SK-N-SH (cell line): ENCODE measurements at regions of chr2 and their contacts with region 1.

Region 1: GRCh38 chr2:174577967-174578589 is 19.5 kb downstream of the WIPF1 start:
- DNase-seq: peak; percentile 51
- H3K4me3 ChIP-seq: no peak overlapping the region
- H3K27ac ChIP-seq: peak overlapping the region; percentile 4 to 7; a peak in 3 of 4 replicates
- H3K4me1 ChIP-seq: no peaks in the 10 kb centered on the region; a peak in 2 of 4 replicates
- H3K27me3 ChIP-seq: no peaks in the 10 kb centered on the region
- CTCF ChIP-seq: peak; percentile 80
- EP300 ChIP-seq: no peak
- RAD21 ChIP-seq: peak; percentile 91

Region 2: GRCh38 chr2:173134703-173135102 is 1443.4 kb before region 1 on chr2:
- CTCF ChIA-PET with region 1: no interaction called
- POLR2A ChIA-PET with region 1: no interaction called
- DNase-seq: no peak
- H3K4me3 ChIP-seq: no peak overlapping the region
- H3K27ac ChIP-seq: no peak overlapping the region
- H3K4me1 ChIP-seq: peaks cover 6 to 30% of the 10 kb centered on the region in 2 experiments; a peak in 3 of 4 replicates
- H3K27me3 ChIP-seq: no peaks in the 10 kb centered on the region
- CTCF ChIP-seq: no peak
- EP300 ChIP-seq: no peak
- RAD21 ChIP-seq: no peak

Region 3: DNA sequence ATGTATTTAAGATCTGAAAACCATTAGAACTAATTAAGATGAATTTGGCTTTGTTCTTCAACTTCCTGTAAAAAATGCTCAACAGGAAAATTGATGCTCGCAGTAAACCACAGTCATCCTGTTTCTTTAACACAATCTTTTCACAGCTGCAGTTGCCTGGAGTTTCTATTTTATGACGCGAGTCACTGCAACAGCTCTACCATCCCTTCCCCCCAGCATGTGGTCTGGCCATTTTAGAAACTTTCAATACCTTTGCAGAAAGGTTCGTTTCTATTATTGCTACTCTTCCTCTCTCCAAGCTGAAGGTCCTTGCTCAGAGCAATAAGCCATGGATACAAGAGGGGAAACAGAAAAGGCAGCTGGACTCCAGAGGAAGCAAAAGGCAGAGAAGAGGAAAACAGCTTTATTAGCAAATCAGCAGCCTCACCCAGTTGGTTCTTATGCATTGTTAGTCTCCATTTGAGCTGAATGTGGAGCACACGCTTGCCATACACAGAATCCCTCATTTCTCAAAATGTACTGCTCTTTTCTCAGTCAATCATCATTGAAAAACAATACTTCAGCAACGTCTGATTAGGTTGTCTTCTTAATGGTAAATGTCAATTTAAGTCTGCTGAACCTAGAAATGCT is 15.6 kb after region 1 on chr2:
- CTCF ChIA-PET with region 1: interaction called, 24 read pairs
- POLR2A ChIA-PET with region 1: no interaction called
- DNase-seq: no peak
- H3K4me3 ChIP-seq: peak overlapping the region in 1 of 2 experiments; percentile 17; a peak in 1 of 4 replicates
- H3K27ac ChIP-seq: peak overlapping the region; percentile 96 to 98
- H3K4me1 ChIP-seq: peaks cover 53 to 63% of the 10 kb centered on the region in 2 experiments
- H3K27me3 ChIP-seq: no peaks in the 10 kb centered on the region
- CTCF ChIP-seq: no peak
- EP300 ChIP-seq: peak; percentile 20 to 62; a peak in 2 of 4 replicates
- RAD21 ChIP-seq: no peak

Region 4: DNA sequence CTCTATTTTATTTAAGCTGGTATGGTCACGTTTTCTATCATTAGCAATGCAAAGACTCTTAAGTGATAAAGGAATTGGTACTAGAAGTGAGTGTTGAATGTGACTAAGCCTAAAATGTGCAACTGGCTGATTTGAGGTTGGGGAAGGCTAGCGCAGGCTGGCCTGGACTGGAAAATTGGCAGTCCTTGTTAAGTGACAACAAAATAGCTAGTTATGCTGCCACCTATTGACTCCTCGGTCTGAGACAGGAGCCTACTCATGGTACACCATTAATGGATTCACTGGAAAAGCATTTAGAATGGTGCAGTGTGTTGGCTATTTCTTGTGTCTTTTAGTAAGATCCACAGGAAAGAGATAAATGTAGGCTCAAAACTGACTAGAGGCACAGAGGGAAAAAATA is 25.2 kb after region 1 on chr2:
- CTCF ChIA-PET with region 1: interaction called, 30 read pairs
- POLR2A ChIA-PET with region 1: no interaction called
- DNase-seq: peak; percentile 36
- H3K4me3 ChIP-seq: no peak overlapping the region
- H3K27ac ChIP-seq: peak overlapping the region in 1 of 2 experiments; percentile 83; a peak in 2 of 4 replicates
- H3K4me1 ChIP-seq: peaks cover 12 to 44% of the 10 kb centered on the region in 2 experiments
- H3K27me3 ChIP-seq: no peaks in the 10 kb centered on the region
- CTCF ChIP-seq: peak; percentile 55
- EP300 ChIP-seq: no peak
- RAD21 ChIP-seq: peak; percentile 67

Region 5: GRCh38 chr2:174682578-174683391 is 104.7 kb after region 1 on chr2:
- CTCF ChIA-PET with region 1: interaction called, 180 read pairs
- POLR2A ChIA-PET with region 1: no interaction called
- DNase-seq: peak; percentile 95
- H3K4me3 ChIP-seq: peak overlapping the region; percentile 89 to 93
- H3K27ac ChIP-seq: peak overlapping the region; percentile 72 to 89
- H3K4me1 ChIP-seq: peaks cover 6 to 47% of the 10 kb centered on the region in 2 experiments; a peak in 2 of 4 replicates
- H3K27me3 ChIP-seq: no peaks in the 10 kb centered on the region
- CTCF ChIP-seq: 0 out of 2 replicates have a peak, but pooled peaks have one; percentile 6
- EP300 ChIP-seq: 0 out of 4 replicates have a peak, but pooled peaks of 1 of the 2 experiments have one; percentile 11
- RAD21 ChIP-seq: no peak

Region 6: GRCh38 chr2:175251425-175252041 is 673.5 kb after region 1 on chr2:
- CTCF ChIA-PET with region 1: no interaction called
- POLR2A ChIA-PET with region 1: no interaction called
- DNase-seq: peak; percentile 40
- H3K4me3 ChIP-seq: no peak overlapping the region; a peak in 1 of 4 replicates
- H3K27ac ChIP-seq: no peak overlapping the region
- H3K4me1 ChIP-seq: no peaks in the 10 kb centered on the region
- H3K27me3 ChIP-seq: no peaks in the 10 kb centered on the region
- CTCF ChIP-seq: peak; percentile 86
- EP300 ChIP-seq: no peak
- RAD21 ChIP-seq: peak; percentile 69